Ovary (tissue), 10 donors: ENCODE measurements at regions of chr10 and their contacts with region 1.

Region 1: GRCh38 chr10:102064868-102065560 is at the start of gene HPS6:
- DNase-seq: peak; percentile 88 to 92 (median 89)
- H3K4me3 ChIP-seq: peak within 1 kb of the TSS; percentile 83
- H3K27ac ChIP-seq: peak within 1 kb of the TSS; percentile 77 to 86
- H3K4me1 ChIP-seq: peaks cover 7% of the 10 kb centered on the region
- H3K27me3 ChIP-seq: no peaks in the 10 kb centered on the region
- CTCF ChIP-seq: no peak
- EP300 ChIP-seq: no peak
- POLR2A ChIP-seq: peak; percentile 67
- total RNA-seq, gene HPS6: 14.4 to 20.9 (median 16.9) TPM

Region 2: DNA sequence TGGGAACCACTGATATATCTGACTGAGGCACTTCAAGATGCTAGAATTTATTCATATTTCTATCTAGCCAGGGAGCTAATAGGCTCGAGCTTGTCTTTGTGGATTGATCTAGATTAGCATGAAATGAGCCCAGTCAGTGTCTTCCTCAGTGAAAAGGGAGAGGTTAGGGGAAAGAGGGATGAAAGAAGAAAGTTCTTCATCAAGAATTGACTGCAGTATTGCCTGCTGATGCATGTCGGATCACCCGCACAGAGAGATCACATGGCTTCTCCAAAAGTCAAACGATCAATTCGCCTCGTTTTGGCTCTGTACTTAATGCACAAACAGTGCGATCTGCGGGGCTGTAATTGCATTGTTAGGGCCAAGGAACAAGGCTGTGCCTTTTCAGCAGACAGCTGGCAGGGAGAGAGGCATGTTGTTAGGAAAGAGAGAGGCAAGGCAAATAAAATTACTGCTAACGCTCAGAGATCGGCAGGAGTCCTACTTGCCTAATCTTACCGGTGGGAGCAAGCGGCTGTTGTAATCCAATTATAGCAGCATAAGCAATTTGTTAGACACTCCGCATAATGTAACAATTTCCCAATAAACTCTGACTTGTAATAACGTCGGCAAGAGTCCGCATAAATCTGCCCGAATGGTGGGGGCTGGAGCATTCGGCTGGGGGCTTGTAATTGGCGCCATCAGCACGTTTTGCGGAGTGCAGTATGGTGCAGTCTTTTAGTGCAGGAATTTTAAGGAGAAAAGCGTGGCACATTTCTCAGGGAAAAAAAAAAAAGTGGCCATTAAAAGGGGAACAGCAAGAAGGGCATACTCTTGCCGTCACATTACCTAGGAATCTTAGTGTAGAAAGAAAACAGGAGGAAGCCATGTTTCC is 579.1 kb before region 1 on chr10:
- intact Hi-C with region 1: no loop called
- DNase-seq: peak; percentile 22 to 46 (median 27)
- H3K4me3 ChIP-seq: no peak overlapping the region
- H3K27ac ChIP-seq: no peak overlapping the region
- H3K4me1 ChIP-seq: peaks cover 3% of the 10 kb centered on the region
- H3K27me3 ChIP-seq: no peaks in the 10 kb centered on the region
- CTCF ChIP-seq: no peak
- EP300 ChIP-seq: no peak
- POLR2A ChIP-seq: no peak

Region 3: GRCh38 chr10:102114861-102115618 is 50.0 kb after region 1 on chr10:
- intact Hi-C with region 1: loop called in 2 of 4 experiments (anchors 5 to 10 kb)
- DNase-seq: peak; percentile 88 to 92 (median 91)
- H3K4me3 ChIP-seq: peak overlapping the region; percentile 69
- H3K27ac ChIP-seq: peak overlapping the region; percentile 70 to 81
- H3K4me1 ChIP-seq: peaks cover 22% of the 10 kb centered on the region
- H3K27me3 ChIP-seq: no peaks in the 10 kb centered on the region
- CTCF ChIP-seq: no peak
- EP300 ChIP-seq: no peak
- POLR2A ChIP-seq: peak; percentile 43